Activated B cell treated with CpG ODN at 0.5 μM for 24 hours (primary cell): ENCODE measurements at regions of chr2 and their contacts with region 1.

Region 1: GRCh38 chr2:37389989-37390765 is 45.7 kb downstream of the QPCT start:
- DNase-seq: peak; percentile 41
- ATAC-seq: peak; percentile 92
- H3K4me3 Mint-ChIP-seq: peak overlapping the region; percentile 71
- H3K27ac Mint-ChIP-seq: no peak overlapping the region
- H3K4me1 Mint-ChIP-seq: peaks cover 3% of the 10 kb centered on the region
- H3K27me3 Mint-ChIP-seq: no peaks in the 10 kb centered on the region
- CTCF ChIP-seq: no peak

Region 2: DNA sequence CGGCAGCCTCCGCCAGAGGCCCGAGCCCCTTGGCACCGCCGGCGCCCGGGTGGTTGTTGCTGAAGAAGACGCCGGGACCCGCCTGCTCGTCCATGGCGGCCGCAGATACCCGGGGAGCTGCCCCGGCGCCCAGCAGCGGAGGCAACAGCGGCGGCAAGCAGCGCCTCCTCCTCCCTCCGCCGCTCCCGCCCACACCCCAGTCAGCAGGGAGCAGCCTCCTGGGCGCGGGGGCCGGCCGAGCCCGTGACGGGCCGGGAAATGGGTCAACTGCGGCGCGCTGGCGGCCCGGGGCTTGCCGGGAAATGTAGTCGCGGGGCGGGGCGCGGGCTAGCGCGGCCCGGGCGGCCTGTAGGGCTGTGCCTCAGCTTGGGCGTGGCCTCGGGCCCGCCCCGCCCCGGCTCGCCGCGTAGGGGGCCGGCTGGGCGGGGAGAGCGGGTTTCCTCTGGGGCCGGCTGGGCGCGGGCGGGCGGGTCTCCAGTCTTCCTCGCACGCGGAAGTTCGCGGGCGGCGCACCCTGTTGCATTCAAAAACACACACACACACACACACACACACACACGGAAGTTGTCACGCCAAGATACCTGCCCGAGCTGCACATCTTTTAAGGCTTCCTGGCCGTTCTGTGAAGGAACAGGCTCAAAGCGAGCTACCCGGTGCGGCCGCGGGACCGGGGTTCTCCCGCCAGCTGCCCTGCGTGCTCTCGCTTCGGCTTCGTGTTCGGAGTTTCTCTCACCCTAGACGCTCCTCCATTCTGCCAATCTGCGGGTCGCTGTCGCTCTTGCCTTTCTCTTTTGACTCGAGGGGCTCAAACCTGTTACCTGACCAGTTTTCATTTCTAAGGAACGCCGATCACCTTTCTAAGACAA is 423.6 kb before region 1 on chr2 and contains the start of gene STRN:
- CTCF ChIA-PET with region 1: no interaction called
- POLR2A ChIA-PET with region 1: no interaction called
- intact Hi-C with region 1: loop called (anchors 5 kb)
- DNase-seq: peak; percentile 100
- ATAC-seq: peak; percentile 91
- H3K4me3 Mint-ChIP-seq: peak within 1 kb of the TSS; percentile 97
- H3K27ac Mint-ChIP-seq: peak within 1 kb of the TSS; percentile 99
- H3K4me1 Mint-ChIP-seq: peaks cover 45% of the 10 kb centered on the region
- H3K27me3 Mint-ChIP-seq: no peaks in the 10 kb centered on the region
- CTCF ChIP-seq: no peak
- total RNA-seq, gene STRN: 24.7 and 24.9 TPM in 2 replicates

Region 3: DNA sequence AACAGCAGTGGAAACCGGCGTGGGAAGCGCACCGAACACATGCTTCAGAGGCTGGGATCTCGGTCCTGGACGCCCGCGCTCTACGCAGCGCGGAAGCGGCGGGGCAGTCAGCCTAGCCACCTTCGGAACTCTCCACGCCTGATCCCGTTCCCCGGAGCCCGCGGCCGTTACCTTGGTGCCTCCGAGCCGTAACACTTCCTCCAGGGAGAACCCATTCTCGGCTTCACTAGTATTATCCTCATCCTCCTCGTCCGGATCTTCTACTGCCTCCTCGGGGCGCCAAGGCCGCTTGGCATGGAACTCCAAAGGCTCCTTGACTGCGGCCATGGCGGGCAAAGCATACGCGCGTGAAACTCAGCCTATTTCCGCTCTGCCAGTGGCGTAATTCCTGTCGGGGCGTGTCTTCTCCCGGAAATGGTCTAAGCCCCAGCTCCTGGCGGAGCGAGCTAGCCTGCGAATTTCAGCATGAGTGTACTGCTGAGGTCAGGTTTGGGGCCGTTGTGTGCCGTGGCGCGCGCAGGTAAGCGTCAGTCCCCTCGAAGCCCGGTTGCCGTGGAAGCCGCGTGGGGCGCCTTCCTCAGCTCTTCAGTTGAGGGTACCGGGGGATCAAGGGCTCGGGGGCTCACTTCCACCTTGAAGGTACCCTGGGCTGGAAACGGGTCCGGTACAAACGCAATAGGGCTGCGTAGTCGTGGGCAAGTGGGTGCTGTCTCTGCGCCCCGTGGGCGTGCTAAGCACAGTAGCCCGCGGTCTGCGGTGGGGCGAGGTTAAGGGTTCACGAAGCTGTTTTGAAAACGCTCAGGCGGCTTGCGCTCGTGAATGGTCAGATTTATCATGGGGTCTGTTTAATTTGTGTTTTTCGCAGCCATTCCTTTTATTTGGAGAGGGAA is 158.7 kb before region 1 on chr2 and contains the starts of genes CEBPZ and NDUFAF7:
- CTCF ChIA-PET with region 1: no interaction called
- POLR2A ChIA-PET with region 1: interaction called, 7 read pairs
- intact Hi-C with region 1: loop called (anchors 1 kb)
- DNase-seq: peak; percentile 80
- ATAC-seq: peak; percentile 91
- H3K4me3 Mint-ChIP-seq: no peak within 1 kb of the TSS
- H3K27ac Mint-ChIP-seq: no peak within 1 kb of the TSS
- H3K4me1 Mint-ChIP-seq: peaks cover 16% of the 10 kb centered on the region
- H3K27me3 Mint-ChIP-seq: no peaks in the 10 kb centered on the region
- CTCF ChIP-seq: no peak
- total RNA-seq, gene CEBPZ: 55.2 and 57.0 TPM in 2 replicates
- total RNA-seq, gene NDUFAF7: 22.4 and 22.8 TPM in 2 replicates

Region 4: DNA sequence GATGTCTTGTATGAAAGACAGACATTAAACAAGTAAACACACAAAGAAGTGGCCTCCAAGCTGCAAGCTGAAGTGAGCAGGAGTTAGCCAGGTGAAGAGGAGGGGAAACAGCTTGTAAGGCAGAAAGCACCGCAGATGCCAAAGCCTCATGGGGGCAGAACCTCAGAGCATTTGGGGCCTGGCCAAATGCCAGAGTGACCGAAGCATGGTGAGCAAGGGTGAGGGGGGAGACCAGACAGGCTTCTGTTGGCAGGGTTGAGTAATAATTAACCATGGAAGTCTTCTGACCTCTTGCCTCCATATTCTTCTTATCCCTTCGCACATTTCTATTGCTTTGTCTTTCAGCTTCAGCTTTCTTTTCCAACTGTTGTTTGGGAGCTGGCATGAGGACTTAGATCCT is 40.1 kb before region 1 on chr2:
- CTCF ChIA-PET with region 1: interaction called, 12 read pairs
- POLR2A ChIA-PET with region 1: interaction called, 27 read pairs
- intact Hi-C with region 1: loop called (anchors 1 kb)
- DNase-seq: peak; percentile 54
- ATAC-seq: peak; percentile 88
- H3K4me3 Mint-ChIP-seq: peak overlapping the region; percentile 46
- H3K27ac Mint-ChIP-seq: peak overlapping the region; percentile 66
- H3K4me1 Mint-ChIP-seq: peaks cover 29% of the 10 kb centered on the region
- H3K27me3 Mint-ChIP-seq: peaks cover 1% of the 10 kb centered on the region
- CTCF ChIP-seq: no peak

Region 5: GRCh38 chr2:37653805-37654378 is 263.7 kb after region 1 on chr2:
- CTCF ChIA-PET with region 1: no interaction called
- POLR2A ChIA-PET with region 1: interaction called, 6 read pairs
- intact Hi-C with region 1: loop called (anchors 1 kb)
- DNase-seq: peak; percentile 52
- ATAC-seq: peak; percentile 62
- H3K4me3 Mint-ChIP-seq: peak overlapping the region; percentile 67
- H3K27ac Mint-ChIP-seq: peak overlapping the region; percentile 78
- H3K4me1 Mint-ChIP-seq: peaks cover 95% of the 10 kb centered on the region
- H3K27me3 Mint-ChIP-seq: no peaks in the 10 kb centered on the region
- CTCF ChIP-seq: no peak

Region 6: DNA sequence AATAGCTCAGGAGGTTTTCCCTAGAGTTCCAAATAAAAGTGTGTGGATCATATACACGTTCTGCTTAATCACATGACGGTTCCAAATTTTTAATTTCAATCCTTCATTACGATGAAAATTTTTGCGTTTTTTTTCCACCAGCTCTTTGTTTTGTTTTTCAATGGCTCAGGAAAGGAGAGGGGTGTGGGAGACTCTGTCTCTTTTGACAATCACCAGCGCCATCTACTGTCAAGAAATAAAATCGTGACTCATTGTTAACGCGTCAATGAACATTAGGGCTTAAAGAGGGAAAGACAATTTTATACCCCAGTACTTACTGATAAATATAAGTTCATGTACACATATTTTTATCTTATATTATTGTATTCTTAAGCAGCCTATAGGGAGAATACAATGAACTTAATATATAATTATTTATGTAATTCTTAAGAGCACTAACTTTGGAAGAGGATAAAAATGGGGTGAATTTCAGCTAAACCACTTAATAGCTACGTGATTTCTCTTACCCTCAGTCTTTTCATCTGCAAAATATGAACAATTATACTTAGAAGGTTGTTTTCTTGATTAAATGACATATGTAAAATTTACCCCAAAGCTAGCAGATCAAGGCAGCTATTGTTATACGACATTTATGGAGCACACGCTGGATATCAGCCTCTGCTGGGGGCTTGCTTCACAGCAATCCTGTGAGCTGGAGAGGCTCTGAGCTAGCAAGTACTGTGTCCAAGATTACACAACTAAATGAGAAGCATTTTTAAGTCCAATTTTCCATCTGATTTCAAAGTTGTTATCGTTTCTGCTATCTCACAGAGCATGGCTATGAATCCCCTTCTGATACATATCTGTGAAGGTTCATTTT is 487.5 kb after region 1 on chr2:
- CTCF ChIA-PET with region 1: interaction called, 85 read pairs
- POLR2A ChIA-PET with region 1: no interaction called
- intact Hi-C with region 1: no loop called
- DNase-seq: no peak
- ATAC-seq: peak; percentile 57
- H3K4me3 Mint-ChIP-seq: no peak overlapping the region
- H3K27ac Mint-ChIP-seq: no peak overlapping the region
- H3K4me1 Mint-ChIP-seq: peaks cover 3% of the 10 kb centered on the region
- H3K27me3 Mint-ChIP-seq: peaks cover 21% of the 10 kb centered on the region
- CTCF ChIP-seq: peak; percentile 76

Region 7: GRCh38 chr2:38274286-38275276 is 884.4 kb after region 1 on chr2:
- CTCF ChIA-PET with region 1: interaction called, 17 read pairs
- POLR2A ChIA-PET with region 1: no interaction called
- intact Hi-C with region 1: no loop called
- DNase-seq: no peak
- ATAC-seq: peak; percentile 56
- H3K4me3 Mint-ChIP-seq: no peak overlapping the region
- H3K27ac Mint-ChIP-seq: no peak overlapping the region
- H3K4me1 Mint-ChIP-seq: peaks cover 3% of the 10 kb centered on the region
- H3K27me3 Mint-ChIP-seq: no peaks in the 10 kb centered on the region
- CTCF ChIP-seq: no peak